Motor neuron (in vitro differentiated cells): ENCODE measurements at regions of chr2 and their contacts with region 1.

Region 1: DNA sequence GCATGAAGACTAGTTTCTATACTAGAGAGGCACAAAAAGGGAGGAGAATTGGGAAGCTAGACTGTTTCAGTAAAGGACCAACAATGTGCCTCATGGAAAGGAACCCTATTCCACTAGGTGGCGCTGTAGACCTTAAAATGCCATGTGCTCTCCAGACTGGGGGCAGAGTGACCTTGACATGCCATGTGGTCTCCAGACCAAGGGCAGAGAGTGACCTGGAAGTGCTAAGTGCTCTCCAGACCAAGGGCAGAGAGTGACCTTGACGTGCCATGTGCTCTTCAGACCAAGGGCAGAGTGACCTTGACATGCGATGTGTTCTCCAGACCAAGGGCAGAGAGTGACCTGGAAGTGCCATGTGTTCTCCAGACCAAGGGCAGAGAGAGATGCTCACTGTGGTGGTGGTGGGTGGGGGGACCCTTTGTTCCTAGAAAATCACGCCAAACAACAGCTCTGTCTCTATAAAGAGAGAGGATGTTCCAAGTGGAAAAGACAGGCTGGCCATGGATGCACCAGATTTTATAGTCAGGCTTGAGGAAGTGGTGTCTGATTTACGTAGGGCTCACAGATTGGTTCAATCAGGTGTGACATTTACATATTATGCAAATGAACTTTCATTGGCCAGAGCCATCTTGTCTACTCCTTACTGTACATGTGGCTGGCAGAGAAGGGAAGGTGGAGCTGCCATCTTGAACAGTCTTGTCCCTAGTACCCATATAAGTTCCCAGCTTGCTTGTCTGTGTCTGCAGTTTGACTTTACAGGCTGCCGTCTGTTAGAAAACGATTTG is 344.0 kb upstream of the DDX18 start:
- ATAC-seq: peak in 4 of 8 experiments; percentile 24 to 90 (median 88)
- H3K4me3 ChIP-seq: no peak overlapping the region
- H3K27ac ChIP-seq: no peak overlapping the region
- H3K4me1 ChIP-seq: no peaks in the 10 kb centered on the region

Region 2: GRCh38 chr2:117411977-117412376 is 58.5 kb before region 1 on chr2:
- in situ Hi-C with region 1: no loop called
- ATAC-seq: no peak
- H3K4me3 ChIP-seq: no peak overlapping the region
- H3K27ac ChIP-seq: no peak overlapping the region
- H3K4me1 ChIP-seq: no peaks in the 10 kb centered on the region

Region 3: GRCh38 chr2:117771969-117772630 is 301.6 kb after region 1 on chr2:
- in situ Hi-C with region 1: loop called in 2 of 9 experiments (anchors 25 kb)
- ATAC-seq: peak; percentile 19 to 78 (median 58)
- H3K4me3 ChIP-seq: no peak overlapping the region
- H3K27ac ChIP-seq: no peak overlapping the region
- H3K4me1 ChIP-seq: peaks cover 0 to 9% of the 10 kb centered on the region in 2 donors

Region 4: GRCh38 chr2:117785740-117786139 is 315.2 kb after region 1 on chr2:
- in situ Hi-C with region 1: loop called in 1 of 9 experiments (anchors 25 kb)
- ATAC-seq: peak in 6 of 8 experiments; percentile 27 to 72 (median 54)
- H3K4me3 ChIP-seq: no peak overlapping the region
- H3K27ac ChIP-seq: no peak overlapping the region
- H3K4me1 ChIP-seq: no peaks in the 10 kb centered on the region